ENCODE measurements at regions of chr6 and their contacts with region 1.

Region 1: DNA sequence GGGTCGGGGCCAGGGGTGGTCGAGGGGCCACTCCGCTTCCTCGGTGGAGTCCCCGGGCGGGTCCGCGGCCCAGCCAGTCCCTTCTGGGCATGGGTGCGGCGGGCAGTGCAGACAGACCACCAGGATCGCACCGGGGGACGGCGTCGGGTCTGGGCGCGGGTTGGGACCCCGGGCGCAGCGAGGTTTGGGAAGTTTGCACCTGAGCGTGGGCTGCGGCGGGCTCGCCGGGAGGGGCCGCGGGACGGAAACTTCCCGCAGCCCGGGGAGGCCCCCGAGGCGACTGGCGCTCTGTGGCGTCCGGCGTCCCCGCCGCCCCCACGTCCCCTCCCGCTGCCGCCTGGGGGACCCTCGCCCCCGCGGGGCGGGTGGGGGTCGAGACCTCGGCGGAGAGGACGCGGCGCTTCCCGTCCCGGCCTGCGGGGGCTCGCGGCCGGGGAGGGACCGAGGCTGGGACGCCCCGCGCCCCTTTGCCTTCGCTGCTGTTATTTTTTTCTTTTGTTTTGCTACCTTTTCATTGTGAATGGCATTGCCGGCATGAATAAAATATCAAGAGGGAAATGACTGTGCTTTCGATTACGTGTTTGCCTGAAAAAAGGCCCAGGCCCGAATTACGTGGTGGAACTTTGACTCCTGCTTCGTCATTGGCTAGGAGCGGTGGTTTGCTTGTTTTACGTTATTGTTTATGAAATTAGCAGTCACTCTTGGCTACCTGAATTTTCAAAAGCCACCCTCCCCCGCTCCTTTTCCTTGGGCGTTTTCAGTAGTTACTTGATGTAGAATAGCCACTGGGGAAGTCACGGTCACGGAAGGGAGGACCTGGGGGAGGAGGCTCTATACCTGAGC is 703 bp downstream of the SNX9 start:
- DNase-seq: peak; percentile 72
- H3K4me3 Mint-ChIP-seq: peak overlapping the region; percentile 93
- H3K27ac Mint-ChIP-seq: peak overlapping the region; percentile 97
- H3K4me1 Mint-ChIP-seq: peaks cover 47% of the 10 kb centered on the region
- H3K27me3 Mint-ChIP-seq: peaks cover 34% of the 10 kb centered on the region

Region 2: DNA sequence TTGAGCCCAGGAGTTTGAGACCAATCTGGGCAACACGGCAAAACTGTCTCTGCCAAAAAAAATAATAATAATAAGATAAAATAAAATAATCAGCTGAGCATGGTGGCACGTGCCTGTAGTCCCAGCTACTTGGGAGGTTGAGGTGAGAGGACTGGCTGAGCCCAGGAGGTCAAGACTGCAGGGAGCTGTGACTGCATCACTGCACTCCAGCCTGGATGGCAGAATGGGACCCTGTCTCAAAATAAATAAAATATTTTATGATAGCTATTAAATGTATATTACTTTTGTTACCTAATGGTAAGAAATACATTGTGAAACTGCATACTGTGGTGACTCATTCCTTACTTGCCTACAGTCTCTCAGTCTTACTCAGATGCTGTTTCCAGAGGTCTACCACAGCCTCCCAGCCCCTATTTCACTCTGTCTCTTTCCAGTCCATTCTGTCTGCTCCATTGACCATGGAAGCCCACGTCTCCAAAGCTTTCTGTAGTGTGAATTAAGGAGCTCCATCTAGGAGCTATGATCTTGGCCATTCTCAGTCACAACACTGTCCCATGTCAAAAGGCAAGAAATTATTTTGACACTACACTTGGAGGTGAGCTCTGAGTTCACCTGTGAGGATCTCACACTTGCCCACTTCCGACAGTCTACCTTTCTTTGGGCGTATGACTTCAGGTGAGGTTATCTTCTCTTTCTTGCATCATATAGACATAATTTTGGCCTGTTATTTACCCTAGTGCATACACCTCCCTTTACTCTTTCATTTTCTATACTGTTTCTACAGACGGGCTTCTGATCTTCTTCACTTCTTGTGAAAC is 23.1 kb before region 1 on chr6:
- intact Hi-C with region 1: loop called (anchors 1 kb)
- DNase-seq: peak; percentile 29
- H3K4me3 Mint-ChIP-seq: peak overlapping the region; percentile 45
- H3K27ac Mint-ChIP-seq: peak overlapping the region; percentile 84
- H3K4me1 Mint-ChIP-seq: peaks cover 62% of the 10 kb centered on the region
- H3K27me3 Mint-ChIP-seq: peaks cover 34% of the 10 kb centered on the region

Region 3: DNA sequence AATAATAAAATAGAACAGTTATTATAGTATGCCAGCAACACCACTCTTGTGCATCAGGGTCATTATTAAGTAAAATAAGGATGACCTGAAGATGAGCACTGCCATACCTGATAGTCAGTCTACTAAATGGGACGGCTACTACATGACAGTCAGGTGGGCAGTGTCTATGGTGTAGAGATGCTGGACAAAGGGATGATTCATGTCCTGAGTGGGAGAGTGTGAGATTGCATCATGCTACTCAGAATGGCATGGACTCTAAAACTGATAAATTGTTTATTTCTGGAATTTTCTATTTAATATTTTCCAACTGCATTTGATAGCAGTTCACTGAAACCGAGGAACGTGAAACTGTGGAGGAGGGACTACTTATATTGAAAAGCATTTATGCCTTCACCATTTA is 38.1 kb after region 1 on chr6:
- intact Hi-C with region 1: loop called (anchors 1 kb)
- DNase-seq: no peak
- H3K4me3 Mint-ChIP-seq: no peak overlapping the region
- H3K27ac Mint-ChIP-seq: no peak overlapping the region
- H3K4me1 Mint-ChIP-seq: peaks cover 52% of the 10 kb centered on the region
- H3K27me3 Mint-ChIP-seq: peaks cover 13% of the 10 kb centered on the region

Region 4: GRCh38 chr6:157885211-157885788 is 61.6 kb after region 1 on chr6:
- intact Hi-C with region 1: loop called (anchors 2 kb)
- DNase-seq: peak; percentile 60
- H3K4me3 Mint-ChIP-seq: peak overlapping the region; percentile 45
- H3K27ac Mint-ChIP-seq: peak overlapping the region; percentile 88
- H3K4me1 Mint-ChIP-seq: peaks cover 79% of the 10 kb centered on the region
- H3K27me3 Mint-ChIP-seq: no peaks in the 10 kb centered on the region

Region 5: DNA sequence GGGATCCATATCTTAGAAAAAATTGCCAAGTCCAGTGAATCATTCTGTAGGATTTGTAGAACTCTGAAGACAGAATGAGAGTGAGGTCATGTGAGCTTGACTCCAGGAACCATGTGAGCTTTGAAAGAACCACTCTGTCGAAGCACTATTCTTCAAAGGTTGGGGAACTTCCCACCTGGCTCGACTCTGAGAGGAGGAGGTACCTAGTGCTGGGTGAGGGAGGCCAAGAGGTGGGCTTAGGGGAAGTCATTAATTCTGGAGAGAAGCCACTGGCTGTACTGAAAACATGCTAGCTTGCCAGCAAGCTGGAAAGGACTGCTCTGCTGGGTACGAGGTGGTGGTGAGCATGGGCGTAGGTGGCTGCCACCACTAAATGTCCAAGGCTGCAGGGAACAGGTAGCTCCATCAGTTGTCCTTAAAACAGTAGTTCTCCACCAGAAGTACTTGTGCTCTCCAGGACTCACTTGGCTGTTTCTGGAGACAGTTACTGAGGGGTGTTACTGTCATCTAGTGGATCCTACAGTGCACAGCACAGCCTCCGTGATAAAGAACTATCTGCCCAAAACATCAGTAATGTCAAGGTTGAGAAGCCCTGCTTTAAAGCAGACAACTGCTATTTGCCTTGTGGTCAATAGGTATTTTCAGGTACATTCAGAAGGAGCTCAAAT is 123.2 kb after region 1 on chr6:
- intact Hi-C with region 1: loop called (anchors 2 kb)
- DNase-seq: no peak
- H3K4me3 Mint-ChIP-seq: no peak overlapping the region
- H3K27ac Mint-ChIP-seq: peak overlapping the region; percentile 24
- H3K4me1 Mint-ChIP-seq: peaks cover 32% of the 10 kb centered on the region
- H3K27me3 Mint-ChIP-seq: peaks cover 9% of the 10 kb centered on the region

Region 6: DNA sequence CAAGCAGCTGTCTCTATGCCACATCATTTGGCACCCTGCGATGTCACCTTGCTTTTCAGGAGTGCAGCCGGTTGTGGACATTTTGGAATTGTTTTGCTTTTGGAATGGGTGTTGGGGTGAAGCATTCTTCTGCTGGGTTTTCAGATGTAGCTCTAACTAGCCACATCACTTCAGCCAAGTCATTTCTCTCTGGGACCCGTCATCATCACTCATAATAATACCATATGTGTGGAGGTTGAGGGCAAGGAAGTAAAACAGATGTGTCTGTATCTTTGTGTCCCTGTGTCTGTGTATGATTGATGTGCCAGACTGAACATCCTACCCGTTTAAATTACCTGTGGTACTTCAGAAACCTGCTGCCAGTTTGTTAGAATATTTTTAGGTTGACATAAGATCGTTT is 439.0 kb after region 1 on chr6:
- intact Hi-C with region 1: no loop called
- DNase-seq: no peak
- H3K4me3 Mint-ChIP-seq: no peak overlapping the region
- H3K27ac Mint-ChIP-seq: no peak overlapping the region
- H3K4me1 Mint-ChIP-seq: peaks cover 24% of the 10 kb centered on the region
- H3K27me3 Mint-ChIP-seq: no peaks in the 10 kb centered on the region

Measured in activated T-helper 1 cell treated with anti-CD3 and anti-CD28 coated beads, Interleukin-12 subunit alpha, Interleukin-12 subunit beta, Interleukin-2, Interleukin-4 antibody, amounts not matched to agents 30 ng/mL and 10 ng/mL and 1 ng/mL, durations not matched to agents 14 hours and 24 hours and 36 hours (primary cell).